Left cardiac atrium (tissue), 4 donors: ENCODE measurements at regions of chr12 and their contacts with region 1.

Region 1: DNA sequence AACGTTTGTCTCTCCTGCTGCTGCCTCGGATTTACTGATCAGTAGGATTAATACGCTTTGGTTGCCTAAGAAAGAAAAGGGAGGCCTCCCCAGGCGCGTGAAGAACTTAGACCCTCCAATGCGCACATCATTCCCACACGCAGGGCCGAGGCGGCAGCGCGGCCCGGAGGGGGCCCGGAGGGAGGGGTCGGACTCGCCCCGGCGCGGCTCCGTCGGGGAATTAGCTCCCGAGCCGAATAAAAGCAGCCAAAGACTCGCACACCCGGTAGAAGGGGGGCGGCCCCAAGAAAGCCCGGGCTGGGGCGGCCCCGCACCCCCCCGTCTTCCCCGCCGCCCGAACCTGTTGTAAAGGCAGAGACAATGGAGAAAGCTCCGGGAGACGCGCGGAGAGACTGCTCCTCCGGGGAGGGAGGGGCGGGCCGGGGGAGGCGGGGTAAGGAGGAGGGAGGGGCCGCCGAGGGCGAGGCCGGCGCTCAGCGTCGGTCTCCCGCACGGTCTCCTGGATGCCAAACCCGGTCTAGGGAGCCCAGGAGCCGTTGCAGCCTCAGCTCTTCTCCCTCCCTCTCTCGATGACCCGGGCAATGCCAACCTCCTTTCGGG is at the start of gene NELL2:
- DNase-seq: peak; percentile 53
- ATAC-seq: peak; percentile 89 to 95
- total RNA-seq, gene NELL2: 0.82 to 1.7 TPM

Region 2: GRCh38 chr12:44465139-44465538 is 410.9 kb before region 1 on chr12:
- intact Hi-C with region 1: loop called in 1 of 2 experiments (anchors 10 kb)
- DNase-seq: no peak
- ATAC-seq: no peak